Heart left ventricle (tissue), 16 donors: ENCODE measurements at regions of chr6 and their contacts with region 1.

Region 1: DNA sequence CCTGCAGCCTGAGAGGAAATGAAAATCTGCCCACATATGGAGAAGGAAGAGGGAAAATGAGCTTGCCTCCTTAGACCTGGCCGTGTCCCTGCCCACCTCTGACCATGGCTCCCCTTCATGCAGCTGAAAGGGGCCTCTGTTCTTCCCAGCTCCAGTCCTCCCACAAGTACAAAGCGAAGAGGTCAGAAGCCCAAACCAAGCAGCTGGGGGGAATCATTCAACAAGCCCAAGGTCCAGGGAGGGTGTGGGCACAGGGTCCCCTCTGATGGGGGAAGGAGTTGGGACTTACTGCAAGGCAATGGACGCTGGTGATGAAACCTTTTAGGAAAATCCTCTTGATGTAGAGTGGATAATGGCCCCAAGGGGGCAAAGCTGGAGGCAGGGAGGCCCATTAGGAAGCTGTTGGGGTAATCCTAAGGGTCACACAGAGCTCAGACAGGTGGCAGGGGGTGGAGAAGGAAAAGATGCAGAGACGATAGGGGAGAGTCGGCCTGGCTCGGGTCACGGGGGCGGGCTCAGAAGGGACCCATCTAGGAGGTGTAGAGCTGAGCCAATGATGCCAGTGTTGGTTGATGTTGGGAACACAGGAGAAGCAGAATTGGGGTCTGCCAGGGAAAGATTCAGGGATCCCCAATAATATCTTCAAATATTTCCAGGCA is 16.1 kb upstream of the GRM4 start:
- DNase-seq: peak in 2 of 5 donors; percentile 11 to 37
- ATAC-seq: no peak
- H3K4me3 ChIP-seq: no peak overlapping the region
- H3K27ac ChIP-seq: no peak overlapping the region
- H3K4me1 ChIP-seq: no peaks in the 10 kb centered on the region
- H3K27me3 ChIP-seq: no peaks in the 10 kb centered on the region
- CTCF ChIP-seq: no peak
- POLR2A ChIP-seq: no peak

Region 2: GRCh38 chr6:33988121-33989015 is 173.6 kb before region 1 on chr6:
- intact Hi-C with region 1: no loop called
- DNase-seq: no peak
- ATAC-seq: peak in 1 of 4 donors; percentile 35
- H3K4me3 ChIP-seq: no peak overlapping the region
- H3K27ac ChIP-seq: no peak overlapping the region
- H3K4me1 ChIP-seq: no peaks in the 10 kb centered on the region
- H3K27me3 ChIP-seq: peaks cover 0 to 56% (median 6%) of the 10 kb centered on the region in 9 donors
- CTCF ChIP-seq: no peak
- POLR2A ChIP-seq: no peak

Region 3: DNA sequence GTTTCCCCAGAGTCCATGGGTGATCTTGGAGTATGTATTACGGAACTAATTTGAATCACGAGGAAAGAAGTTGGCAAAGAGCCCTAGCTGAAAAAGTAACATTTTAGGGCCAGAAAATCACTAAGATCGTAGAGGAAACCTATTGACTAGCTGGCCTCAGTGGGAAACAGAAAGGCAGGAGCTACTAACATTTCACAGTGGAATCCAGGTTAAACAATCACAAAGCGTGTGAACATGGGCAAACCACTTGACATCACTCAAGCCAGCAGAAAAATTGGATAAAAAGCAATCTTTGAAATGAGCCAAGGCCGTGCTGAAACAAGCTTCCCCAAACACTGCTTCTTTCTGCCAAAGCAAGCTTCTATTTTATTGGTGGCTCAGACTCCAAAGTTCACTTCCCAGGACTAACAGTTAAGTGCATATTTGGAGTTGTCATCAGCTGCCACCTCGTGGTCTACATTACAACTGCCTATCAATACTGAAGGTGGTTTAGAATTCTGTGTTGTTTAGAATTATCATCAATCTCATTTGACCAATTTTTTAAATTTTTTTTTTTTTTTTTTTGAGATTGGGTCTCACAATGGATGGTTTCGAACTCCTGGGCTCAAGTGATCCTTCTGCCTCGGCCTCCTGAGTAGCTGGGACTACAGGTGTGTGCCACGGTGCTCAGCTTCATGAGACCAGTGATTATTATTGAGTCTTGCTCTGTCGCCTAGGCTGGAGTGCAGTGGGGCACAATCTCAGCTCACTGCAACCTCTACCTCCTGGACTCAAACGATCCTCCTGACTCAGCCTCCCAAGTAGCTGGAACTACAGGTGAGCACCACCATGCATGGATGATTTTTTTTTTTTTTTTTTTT is 253.2 kb after region 1 on chr6:
- intact Hi-C with region 1: loop called in 1 of 10 experiments (anchors 10 kb)
- DNase-seq: peak in 4 of 5 donors; percentile 48 to 67 (median 61)
- ATAC-seq: peak; percentile 85 to 94 (median 92)
- H3K4me3 ChIP-seq: peak overlapping the region in 1 of 12 donors; percentile 16
- H3K27ac ChIP-seq: peak overlapping the region in 9 of 12 donors; percentile 16 to 78 (median 55)
- H3K4me1 ChIP-seq: peaks cover 0 to 11% (median 8%) of the 10 kb centered on the region in 12 donors
- H3K27me3 ChIP-seq: no peaks in the 10 kb centered on the region
- CTCF ChIP-seq: peak; percentile 64 to 87 (median 80)
- POLR2A ChIP-seq: no peak

Region 4: GRCh38 chr6:34602318-34603111 is 440.5 kb after region 1 on chr6:
- intact Hi-C with region 1: loop called in 2 of 10 experiments (anchors 10 kb)
- DNase-seq: no peak
- ATAC-seq: peak in 2 of 4 donors; percentile 49
- H3K4me3 ChIP-seq: no peak overlapping the region
- H3K27ac ChIP-seq: peak overlapping the region in 4 of 12 donors; percentile 7 to 54 (median 22)
- H3K4me1 ChIP-seq: peaks cover 9 to 55% (median 32%) of the 10 kb centered on the region in 12 donors
- H3K27me3 ChIP-seq: no peaks in the 10 kb centered on the region
- CTCF ChIP-seq: no peak
- POLR2A ChIP-seq: no peak